ENCODE measurements at regions of chr12 and their contacts with region 1.

Region 1: GRCh38 chr12:76310110-76310509 is 38.1 kb downstream of the BBS10 start:
- DNase-seq: no peak

Region 2: GRCh38 chr12:76290963-76291863 is 18.9 kb before region 1 on chr12:
- intact Hi-C with region 1: loop called in 1 of 2 experiments (anchors 1 kb)
- DNase-seq: no peak

Measured in posterior vena cava (tissue), 2 donors.